ENCODE measurements at regions of chr19 and their contacts with region 1.

Region 1: DNA sequence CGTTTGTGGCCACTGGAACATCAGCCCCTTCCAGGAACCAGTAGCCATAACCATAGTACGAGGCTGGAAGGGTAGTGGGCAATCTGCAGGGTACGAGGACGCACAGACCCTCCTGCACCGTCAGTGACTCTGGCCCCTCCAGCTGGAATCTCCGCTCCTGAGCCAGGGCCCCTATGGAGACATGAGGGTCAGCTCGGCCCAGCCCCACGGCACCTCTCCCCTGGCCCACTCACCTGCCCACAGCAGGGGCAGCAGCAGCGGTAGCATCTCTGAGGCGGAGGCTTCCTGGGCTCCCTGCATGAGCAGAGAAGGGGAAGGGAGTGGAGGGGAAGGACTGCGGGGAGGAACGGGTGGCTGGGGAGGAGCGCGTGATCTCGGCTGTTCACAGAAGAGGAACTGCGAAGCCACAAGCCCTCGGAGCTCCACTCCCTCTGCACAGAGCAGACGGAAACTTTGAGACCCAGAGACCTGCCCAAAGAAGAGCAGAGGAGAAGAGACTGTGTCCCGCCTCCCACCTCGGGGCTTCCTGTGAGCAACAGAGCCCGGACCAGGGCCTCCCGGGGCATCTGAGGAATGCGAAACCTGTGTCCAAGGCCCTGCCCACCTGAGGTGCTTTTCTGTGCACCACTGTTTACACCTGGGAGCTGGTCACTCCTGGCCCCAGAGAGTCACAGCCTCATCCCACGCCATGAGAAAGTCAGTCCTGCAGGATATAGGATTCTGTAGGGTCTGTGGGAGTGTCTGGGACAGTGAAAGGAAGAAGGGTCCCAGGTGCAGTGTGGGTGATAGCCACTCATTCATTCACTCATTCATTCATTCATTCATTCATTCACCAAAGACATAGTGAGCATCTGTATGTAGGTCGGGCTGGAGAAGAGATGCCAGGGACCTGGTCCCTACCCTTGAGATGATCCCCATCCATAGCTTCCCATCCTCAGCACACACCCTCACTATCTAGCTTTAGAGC is at the start of gene SIGLEC6:
- DNase-seq: peak; percentile 45 to 72 (median 59)
- ATAC-seq: peak; percentile 37 to 84 (median 62)
- H3K4me3 ChIP-seq: no peak within 1 kb of the TSS
- H3K27ac ChIP-seq: no peak within 1 kb of the TSS
- H3K4me1 ChIP-seq: no peaks in the 10 kb centered on the region
- H3K27me3 ChIP-seq: peaks cover 0 to 32% (median 5%) of the 10 kb centered on the region in 9 donors
- CTCF ChIP-seq: no peak
- POLR2A ChIP-seq: no peak
- total RNA-seq, gene SIGLEC6: 0.23 to 0.40 (median 0.25) TPM in 5 of 9 donors, not detected in the others

Region 2: GRCh38 chr19:51272183-51272810 is 259.3 kb before region 1 on chr19:
- intact Hi-C with region 1: no loop called
- DNase-seq: no peak
- ATAC-seq: no peak
- H3K4me3 ChIP-seq: no peak overlapping the region
- H3K27ac ChIP-seq: no peak overlapping the region
- H3K4me1 ChIP-seq: peaks cover 0 to 14% (median 0%) of the 10 kb centered on the region in 12 donors
- H3K27me3 ChIP-seq: peaks cover 0 to 20% (median 0%) of the 10 kb centered on the region in 9 donors
- CTCF ChIP-seq: no peak
- POLR2A ChIP-seq: no peak

Region 3: GRCh38 chr19:51637362-51637978 is 105.8 kb after region 1 on chr19:
- intact Hi-C with region 1: loop called in 1 of 10 experiments (anchors 10 kb)
- DNase-seq: no peak
- ATAC-seq: no peak
- H3K4me3 ChIP-seq: no peak overlapping the region
- H3K27ac ChIP-seq: no peak overlapping the region
- H3K4me1 ChIP-seq: peaks cover 0 to 10% (median 0%) of the 10 kb centered on the region in 12 donors
- H3K27me3 ChIP-seq: peaks cover 0 to 7% (median 0%) of the 10 kb centered on the region in 9 donors
- CTCF ChIP-seq: peak in 9 of 12 donors; percentile 17 to 56 (median 27)
- POLR2A ChIP-seq: no peak

Measured in heart left ventricle (tissue), 16 donors.